ENCODE measurements at regions of chr1 and their contacts with region 1.

Region 1: DNA sequence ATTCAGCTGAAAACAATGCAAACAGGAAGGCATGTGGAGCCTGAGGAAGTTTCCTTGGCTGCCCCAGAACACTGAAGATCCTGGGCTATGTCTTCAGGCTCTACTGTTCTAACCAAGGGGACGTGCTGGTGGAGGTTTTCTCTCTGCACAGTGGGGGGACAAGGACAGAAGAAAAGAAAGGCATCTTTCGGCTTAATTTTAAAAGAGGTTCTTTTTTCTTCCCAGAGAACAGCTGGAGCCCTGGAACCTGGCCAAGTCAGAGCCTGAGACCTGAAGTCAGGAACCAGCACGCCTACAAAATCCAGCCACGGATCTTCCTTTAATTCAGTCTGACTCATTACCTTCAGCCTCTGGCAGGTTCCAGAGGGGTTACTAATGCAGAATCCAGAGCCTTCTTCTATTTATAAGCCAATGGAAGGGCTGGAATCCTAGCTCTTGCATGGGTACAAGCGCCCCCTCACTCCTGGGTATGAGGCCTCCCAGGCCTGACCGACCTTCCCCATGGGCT is 19.8 kb downstream of the CTNNBIP1 start:
- DNase-seq: peak; percentile 94
- ATAC-seq: peak; percentile 53
- H3K4me3 ChIP-seq: no peak overlapping the region; the same call in 1 of the 2 replicates
- H3K27ac ChIP-seq: peak overlapping the region; percentile 99
- H3K4me1 ChIP-seq: peaks cover 56% of the 10 kb centered on the region
- H3K27me3 ChIP-seq: no peaks in the 10 kb centered on the region
- CTCF ChIP-seq: no peak

Region 2: GRCh38 chr1:9874959-9875635 is 15.2 kb before region 1 on chr1:
- CTCF ChIA-PET with region 1: no interaction called
- POLR2A ChIA-PET with region 1: no interaction called
- intact Hi-C with region 1: loop called (anchors 2 kb)
- DNase-seq: peak; percentile 81
- ATAC-seq: peak; percentile 49
- H3K4me3 ChIP-seq: no peak overlapping the region
- H3K27ac ChIP-seq: no peak overlapping the region
- H3K4me1 ChIP-seq: peaks cover 30% of the 10 kb centered on the region
- H3K27me3 ChIP-seq: no peaks in the 10 kb centered on the region
- CTCF ChIP-seq: peak; percentile 95

Measured in PC-3 (cell line).